Activated CD4-positive, alpha-beta memory T cell treated with anti-CD3 and anti-CD28 coated beads, Interleukin-2, amount 10 ng/mL, durations not matched to agents 7 days and 5 days (primary cell): ENCODE measurements at regions of chr4 and their contacts with region 1.

Region 1: GRCh38 chr4:6327041-6327917 is 57.6 kb downstream of the WFS1 start:
- DNase-seq: peak; percentile 84
- H3K4me3 Mint-ChIP-seq: no peak overlapping the region
- H3K27ac Mint-ChIP-seq: no peak overlapping the region
- H3K4me1 Mint-ChIP-seq: peaks cover 28% of the 10 kb centered on the region
- H3K27me3 Mint-ChIP-seq: peaks cover 34% of the 10 kb centered on the region

Region 2: DNA sequence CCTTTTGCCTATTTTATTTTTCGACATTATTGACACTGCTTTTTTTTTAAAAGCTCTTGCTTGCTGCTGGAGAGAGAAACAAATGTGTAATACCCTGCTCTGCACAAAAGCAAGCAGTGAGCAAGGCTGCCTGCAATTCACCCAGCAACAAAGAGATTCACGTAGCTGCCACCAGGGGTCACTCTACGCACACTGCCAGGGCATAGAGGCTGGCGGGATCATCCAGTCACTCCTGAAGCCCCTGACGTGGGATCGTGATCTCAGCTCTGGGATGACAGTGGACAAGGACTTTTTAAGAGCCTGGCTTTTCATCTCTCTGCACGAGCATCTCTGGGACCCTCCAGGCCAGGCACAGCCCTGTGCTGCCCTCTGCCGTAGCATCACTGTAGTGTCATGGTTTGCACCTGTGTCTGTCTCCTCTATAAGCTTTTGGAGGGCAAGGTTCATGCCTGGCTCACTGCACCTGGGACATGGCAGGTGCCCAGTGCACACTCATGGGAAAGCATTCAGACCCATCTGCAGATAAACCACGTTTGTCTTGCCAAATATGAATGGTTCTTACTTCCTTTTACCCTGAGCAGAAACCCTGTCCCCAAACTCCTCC is 328.8 kb before region 1 on chr4:
- CTCF ChIA-PET with region 1: interaction called, 50 read pairs
- POLR2A ChIA-PET with region 1: no interaction called
- DNase-seq: peak; percentile 59
- H3K4me3 Mint-ChIP-seq: no peak overlapping the region
- H3K27ac Mint-ChIP-seq: no peak overlapping the region
- H3K4me1 Mint-ChIP-seq: peaks cover 21% of the 10 kb centered on the region
- H3K27me3 Mint-ChIP-seq: peaks cover 5% of the 10 kb centered on the region

Region 3: GRCh38 chr4:6134612-6135220 is 192.6 kb before region 1 on chr4:
- CTCF ChIA-PET with region 1: interaction called, 21 read pairs
- POLR2A ChIA-PET with region 1: no interaction called
- DNase-seq: peak; percentile 85
- H3K4me3 Mint-ChIP-seq: no peak overlapping the region
- H3K27ac Mint-ChIP-seq: peak overlapping the region; percentile 77
- H3K4me1 Mint-ChIP-seq: peaks cover 41% of the 10 kb centered on the region
- H3K27me3 Mint-ChIP-seq: no peaks in the 10 kb centered on the region

Region 4: DNA sequence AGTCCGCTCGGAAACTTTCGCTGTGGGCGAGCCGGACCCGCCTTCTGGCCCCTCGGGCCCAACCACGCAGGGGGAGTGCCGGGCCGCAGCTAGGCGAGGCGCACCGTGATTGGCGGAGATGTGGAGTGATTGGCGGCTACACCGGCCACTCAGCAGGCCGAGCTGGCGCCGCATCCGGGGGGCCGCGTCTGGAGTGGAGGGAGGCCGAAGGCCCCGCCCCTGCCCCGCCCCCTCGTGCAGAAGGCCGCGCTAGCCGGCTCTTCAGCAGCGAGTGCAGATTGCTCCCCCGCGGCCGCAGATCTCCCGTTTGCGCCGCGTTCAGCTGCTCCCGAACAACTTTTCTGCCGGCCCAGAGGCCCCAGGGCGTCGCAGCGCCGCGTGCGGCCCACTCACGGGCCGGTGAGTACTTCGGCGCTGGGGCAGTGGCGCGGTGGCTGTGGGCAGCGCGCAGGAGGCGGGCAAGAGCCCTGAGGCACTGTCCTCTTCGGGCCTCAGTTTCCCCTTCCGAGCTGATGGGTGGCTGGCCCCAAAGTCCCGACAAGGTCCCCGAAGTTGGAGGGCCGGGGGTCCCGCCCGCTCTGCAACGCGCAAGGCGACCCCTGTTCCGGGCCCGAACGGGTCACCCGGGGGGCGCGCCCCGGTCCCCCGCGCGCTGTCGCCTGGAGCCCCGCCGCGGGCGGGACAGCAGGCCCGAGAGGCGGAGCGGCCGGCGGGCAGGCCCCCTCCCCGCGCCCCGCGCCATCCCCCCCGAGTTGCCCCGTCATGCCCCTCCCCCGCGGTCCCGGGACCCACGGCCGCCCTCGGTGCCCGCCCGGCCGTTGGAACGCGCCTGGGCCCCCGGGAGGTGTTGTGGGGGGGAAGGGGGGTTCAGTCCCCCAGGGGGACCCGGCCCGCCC is 57.4 kb before region 1 on chr4 and contains the start of gene WFS1:
- CTCF ChIA-PET with region 1: interaction called, 229 read pairs
- POLR2A ChIA-PET with region 1: interaction called, 5 read pairs
- DNase-seq: peak; percentile 98
- H3K4me3 Mint-ChIP-seq: peak within 1 kb of the TSS; percentile 72
- H3K27ac Mint-ChIP-seq: no peak within 1 kb of the TSS
- H3K4me1 Mint-ChIP-seq: peaks cover 27% of the 10 kb centered on the region
- H3K27me3 Mint-ChIP-seq: peaks cover 52% of the 10 kb centered on the region
- total RNA-seq, gene WFS1: 2.4 to 3.5 TPM

Region 5: GRCh38 chr4:6316461-6317003 is 10.7 kb before region 1 on chr4:
- CTCF ChIA-PET with region 1: interaction called, 22 read pairs
- POLR2A ChIA-PET with region 1: interaction called, 4 read pairs
- DNase-seq: no peak
- H3K4me3 Mint-ChIP-seq: no peak overlapping the region
- H3K27ac Mint-ChIP-seq: no peak overlapping the region
- H3K4me1 Mint-ChIP-seq: peaks cover 19% of the 10 kb centered on the region
- H3K27me3 Mint-ChIP-seq: peaks cover 27% of the 10 kb centered on the region

Region 6: DNA sequence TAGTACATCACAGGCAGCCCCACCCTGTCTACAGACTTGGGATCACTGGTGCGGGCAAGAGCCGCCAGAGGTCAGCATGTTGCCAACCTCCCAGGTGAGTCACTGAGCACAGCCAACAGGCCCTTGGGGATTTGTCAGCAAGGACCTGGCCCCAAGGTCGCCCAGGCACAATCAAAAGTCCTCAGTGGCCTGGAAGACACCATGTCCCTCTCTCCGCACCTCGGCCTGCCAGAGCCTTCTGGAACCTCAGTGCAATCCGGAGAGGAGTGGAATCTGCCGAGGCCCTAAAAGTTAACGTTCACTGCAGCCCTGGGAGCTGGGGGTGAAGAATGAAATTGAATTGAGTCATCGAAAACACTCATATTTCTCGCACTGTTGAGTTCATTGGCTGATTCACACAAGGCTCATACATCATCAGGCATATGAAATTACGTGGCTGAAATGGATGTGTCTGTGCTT is 16.7 kb after region 1 on chr4:
- CTCF ChIA-PET with region 1: interaction called, 19 read pairs
- POLR2A ChIA-PET with region 1: no interaction called
- DNase-seq: no peak
- H3K4me3 Mint-ChIP-seq: no peak overlapping the region
- H3K27ac Mint-ChIP-seq: no peak overlapping the region
- H3K4me1 Mint-ChIP-seq: peaks cover 11% of the 10 kb centered on the region
- H3K27me3 Mint-ChIP-seq: peaks cover 24% of the 10 kb centered on the region

Region 7: DNA sequence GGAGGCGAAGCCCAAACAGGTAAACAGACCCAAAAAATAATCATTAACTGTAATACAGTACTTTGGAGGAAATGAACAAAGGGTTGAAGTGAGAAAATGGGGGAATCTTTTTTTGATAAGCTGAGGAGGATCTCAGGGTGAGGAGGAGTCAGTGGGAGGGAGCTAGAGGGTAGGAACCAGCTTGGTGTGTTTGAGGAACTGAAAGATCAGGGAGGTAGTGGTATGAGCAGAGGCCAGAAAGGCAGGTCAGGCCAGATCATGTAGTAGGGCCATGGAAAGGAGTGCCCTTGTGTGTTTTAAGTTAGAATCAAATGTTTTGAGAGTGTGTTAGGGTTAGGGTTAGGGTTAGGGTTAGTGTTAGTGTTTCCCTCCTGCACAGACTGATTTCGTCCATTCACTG is 96.3 kb after region 1 on chr4:
- CTCF ChIA-PET with region 1: no interaction called
- POLR2A ChIA-PET with region 1: no interaction called
- DNase-seq: no peak
- H3K4me3 Mint-ChIP-seq: no peak overlapping the region
- H3K27ac Mint-ChIP-seq: no peak overlapping the region
- H3K4me1 Mint-ChIP-seq: no peaks in the 10 kb centered on the region
- H3K27me3 Mint-ChIP-seq: peaks cover 6% of the 10 kb centered on the region

Region 8: GRCh38 chr4:6546681-6547447 is 219.6 kb after region 1 on chr4:
- CTCF ChIA-PET with region 1: interaction called, 29 read pairs
- POLR2A ChIA-PET with region 1: no interaction called
- DNase-seq: peak; percentile 58
- H3K4me3 Mint-ChIP-seq: no peak overlapping the region
- H3K27ac Mint-ChIP-seq: no peak overlapping the region
- H3K4me1 Mint-ChIP-seq: no peaks in the 10 kb centered on the region
- H3K27me3 Mint-ChIP-seq: peaks cover 14% of the 10 kb centered on the region